Ascending aorta (tissue), 2 donors: ENCODE measurements at regions of chr3 and their contacts with region 1.

Region 1: GRCh38 chr3:171829841-171830517 is 13.2 kb upstream of the TMEM212 start:
- DNase-seq: peak in 1 of 2 donors; percentile 75
- H3K4me3 ChIP-seq: no peak overlapping the region
- H3K27ac ChIP-seq: peak overlapping the region in 1 of 2 donors; percentile 18
- H3K4me1 ChIP-seq: peaks cover 0 to 9% of the 10 kb centered on the region in 2 donors
- H3K27me3 ChIP-seq: no peaks in the 10 kb centered on the region
- CTCF ChIP-seq: peak; percentile 43 to 66 (median 59)

Region 2: DNA sequence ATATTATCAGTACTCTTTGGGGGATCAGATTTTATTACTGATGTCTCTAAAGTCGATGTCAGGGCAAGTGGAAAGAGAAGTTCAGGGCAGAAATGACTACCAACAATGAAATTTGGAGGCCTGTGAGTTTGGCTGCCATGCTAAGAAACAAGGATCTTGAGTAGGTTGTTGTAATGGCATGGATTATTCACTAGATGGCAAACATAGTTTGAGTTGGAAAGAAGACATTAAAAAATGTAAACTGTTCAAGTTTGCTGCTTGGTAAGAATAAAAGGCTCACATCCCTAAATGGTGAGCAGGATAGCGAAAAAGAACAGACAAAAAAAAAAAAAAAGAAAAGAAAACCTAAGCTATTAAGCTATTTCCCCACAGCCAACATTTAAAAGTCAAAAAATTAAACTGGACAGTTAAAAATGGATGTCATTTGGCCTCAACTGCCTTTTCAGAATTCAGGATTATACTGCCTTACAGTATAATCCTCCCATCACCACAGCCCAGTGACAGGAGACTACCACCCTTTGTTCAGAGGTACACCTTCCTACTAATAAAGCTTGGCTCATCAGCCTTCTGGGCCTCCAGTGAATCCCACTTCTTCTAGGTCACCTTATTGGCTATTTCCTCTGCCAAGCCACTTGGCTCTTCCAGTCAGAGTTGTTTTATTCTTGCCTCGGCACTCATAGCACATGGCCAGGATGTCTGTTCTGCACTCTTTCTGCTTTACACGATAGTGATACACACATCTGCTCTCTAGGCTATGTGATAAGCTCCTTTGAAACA is 183.4 kb before region 1 on chr3:
- intact Hi-C with region 1: loop called (anchors 5 kb)
- DNase-seq: no peak
- H3K4me3 ChIP-seq: no peak overlapping the region
- H3K27ac ChIP-seq: peak overlapping the region; percentile 8 to 49
- H3K4me1 ChIP-seq: no peaks in the 10 kb centered on the region
- H3K27me3 ChIP-seq: no peaks in the 10 kb centered on the region
- CTCF ChIP-seq: peak; percentile 55 to 78 (median 73)

Region 3: GRCh38 chr3:172814738-172815137 is 984.8 kb after region 1 on chr3:
- intact Hi-C with region 1: no loop called
- DNase-seq: no peak
- H3K4me3 ChIP-seq: no peak overlapping the region
- H3K27ac ChIP-seq: no peak overlapping the region
- H3K4me1 ChIP-seq: no peaks in the 10 kb centered on the region
- H3K27me3 ChIP-seq: no peaks in the 10 kb centered on the region
- CTCF ChIP-seq: no peak